ENCODE measurements at regions of chr16 and their contacts with region 1.

Region 1: DNA sequence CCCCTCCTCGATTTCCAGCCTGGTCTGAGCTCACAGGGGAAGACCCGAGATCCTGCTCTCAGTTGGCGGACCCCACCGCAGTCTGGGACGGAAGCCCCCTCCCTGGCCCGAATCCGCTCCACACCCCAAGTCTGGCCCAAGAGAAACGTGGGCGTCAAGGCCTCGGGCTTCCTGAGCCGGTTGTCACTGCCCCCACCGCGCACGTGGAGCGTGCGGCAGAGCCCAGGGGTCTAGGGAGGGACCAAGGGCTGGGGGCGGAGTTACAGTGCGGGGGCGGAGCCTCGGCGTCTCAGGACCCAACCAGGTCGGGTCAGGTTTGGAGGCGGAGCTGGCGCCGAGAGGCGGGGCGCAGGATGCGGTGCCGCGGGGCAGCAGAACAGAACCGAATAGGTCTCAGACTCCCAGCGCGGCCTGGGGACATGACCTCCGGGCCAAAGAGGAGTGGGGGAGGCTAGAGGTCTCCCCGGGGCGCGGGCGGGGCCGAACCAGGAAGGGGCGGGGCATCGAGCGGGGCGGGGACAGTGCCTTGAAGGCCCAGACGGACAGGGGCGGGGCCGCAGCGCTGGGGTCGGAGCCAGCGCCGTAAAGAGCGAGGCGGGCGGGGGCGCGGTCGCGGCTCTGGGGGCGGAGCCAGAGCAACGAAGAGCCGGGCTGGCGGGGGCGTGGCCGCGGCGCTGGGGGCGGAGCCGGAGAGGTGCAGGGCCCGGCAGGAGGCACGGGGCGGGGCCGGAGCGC is 431 bp upstream of the ZFPM1 start:
- DNase-seq: peak; percentile 97 to 100 (median 99)
- ATAC-seq: peak; percentile 72
- H3K4me3 ChIP-seq: peak overlapping the region; percentile 52 to 59
- H3K4me3 Mint-ChIP-seq: peak overlapping the region; percentile 85
- H3K27ac ChIP-seq: peak overlapping the region; percentile 55 to 80
- H3K27ac Mint-ChIP-seq: peak overlapping the region; percentile 88
- H3K4me1 ChIP-seq: peaks cover 33% of the 10 kb centered on the region
- H3K4me1 Mint-ChIP-seq: peaks cover 32% of the 10 kb centered on the region
- H3K27me3 ChIP-seq: no peaks in the 10 kb centered on the region
- H3K27me3 Mint-ChIP-seq: no peaks in the 10 kb centered on the region
- CTCF ChIP-seq: no peak

Region 2: DNA sequence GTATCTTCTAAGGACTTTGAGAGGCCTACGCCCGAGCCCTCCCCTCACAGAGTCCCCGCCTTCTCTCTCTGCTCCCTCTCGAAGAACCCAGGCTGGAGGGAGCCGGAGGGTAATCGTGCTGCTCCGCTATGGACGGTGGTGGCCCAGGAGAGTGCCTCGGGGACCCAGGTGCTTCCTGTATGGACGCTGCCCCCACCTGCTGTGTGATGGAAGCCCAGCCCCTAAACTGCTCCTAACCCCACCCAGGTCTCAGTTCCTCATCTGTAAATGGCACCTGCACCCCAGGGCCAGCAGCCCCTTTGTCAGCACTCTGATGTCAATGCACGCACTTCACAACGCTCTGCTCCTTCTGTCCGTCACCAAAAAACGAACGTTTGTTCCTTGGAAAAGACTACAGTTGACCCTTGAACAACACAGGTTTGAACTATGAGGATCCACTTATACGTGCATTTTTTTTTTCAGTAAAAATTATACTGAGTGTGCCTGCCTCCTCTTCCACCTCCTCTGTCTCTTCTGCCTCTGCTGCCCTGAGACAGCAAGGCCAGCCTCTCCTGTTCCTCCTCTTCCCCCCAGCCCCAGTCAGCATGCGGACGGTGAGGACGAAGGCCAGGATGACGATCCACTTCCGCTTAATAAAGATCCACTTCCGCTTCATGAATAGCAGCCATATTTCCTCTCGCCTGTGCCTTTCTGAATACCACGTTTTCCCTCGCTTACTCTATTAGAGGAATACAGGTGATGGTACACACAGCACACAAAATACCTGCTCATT is 383.1 kb before region 1 on chr16:
- CTCF ChIA-PET with region 1: no interaction called
- POLR2A ChIA-PET with region 1: no interaction called
- intact Hi-C with region 1: no loop called
- DNase-seq: peak in 2 of 9 experiments; percentile 20 to 48
- ATAC-seq: no peak
- H3K4me3 ChIP-seq: no peak overlapping the region
- H3K4me3 Mint-ChIP-seq: no peak overlapping the region
- H3K27ac ChIP-seq: no peak overlapping the region
- H3K27ac Mint-ChIP-seq: peak overlapping the region; percentile 30
- H3K4me1 ChIP-seq: no peaks in the 10 kb centered on the region
- H3K4me1 Mint-ChIP-seq: no peaks in the 10 kb centered on the region
- H3K27me3 ChIP-seq: no peaks in the 10 kb centered on the region
- H3K27me3 Mint-ChIP-seq: no peaks in the 10 kb centered on the region
- CTCF ChIP-seq: no peak

Region 3: GRCh38 chr16:88468275-88469141 is 15.9 kb after region 1 on chr16:
- CTCF ChIA-PET with region 1: interaction called, 6 read pairs
- POLR2A ChIA-PET with region 1: interaction called, 5 read pairs
- intact Hi-C with region 1: loop called (anchors 1 kb)
- DNase-seq: peak in 2 of 9 experiments; percentile 43 to 52
- ATAC-seq: peak; percentile 8
- H3K4me3 ChIP-seq: no peak overlapping the region
- H3K4me3 Mint-ChIP-seq: no peak overlapping the region
- H3K27ac ChIP-seq: peak overlapping the region; percentile 74 to 77
- H3K27ac Mint-ChIP-seq: peak overlapping the region; percentile 66
- H3K4me1 ChIP-seq: peaks cover 83% of the 10 kb centered on the region
- H3K4me1 Mint-ChIP-seq: peaks cover 53% of the 10 kb centered on the region
- H3K27me3 ChIP-seq: no peaks in the 10 kb centered on the region
- H3K27me3 Mint-ChIP-seq: no peaks in the 10 kb centered on the region
- CTCF ChIP-seq: no peak

Region 4: DNA sequence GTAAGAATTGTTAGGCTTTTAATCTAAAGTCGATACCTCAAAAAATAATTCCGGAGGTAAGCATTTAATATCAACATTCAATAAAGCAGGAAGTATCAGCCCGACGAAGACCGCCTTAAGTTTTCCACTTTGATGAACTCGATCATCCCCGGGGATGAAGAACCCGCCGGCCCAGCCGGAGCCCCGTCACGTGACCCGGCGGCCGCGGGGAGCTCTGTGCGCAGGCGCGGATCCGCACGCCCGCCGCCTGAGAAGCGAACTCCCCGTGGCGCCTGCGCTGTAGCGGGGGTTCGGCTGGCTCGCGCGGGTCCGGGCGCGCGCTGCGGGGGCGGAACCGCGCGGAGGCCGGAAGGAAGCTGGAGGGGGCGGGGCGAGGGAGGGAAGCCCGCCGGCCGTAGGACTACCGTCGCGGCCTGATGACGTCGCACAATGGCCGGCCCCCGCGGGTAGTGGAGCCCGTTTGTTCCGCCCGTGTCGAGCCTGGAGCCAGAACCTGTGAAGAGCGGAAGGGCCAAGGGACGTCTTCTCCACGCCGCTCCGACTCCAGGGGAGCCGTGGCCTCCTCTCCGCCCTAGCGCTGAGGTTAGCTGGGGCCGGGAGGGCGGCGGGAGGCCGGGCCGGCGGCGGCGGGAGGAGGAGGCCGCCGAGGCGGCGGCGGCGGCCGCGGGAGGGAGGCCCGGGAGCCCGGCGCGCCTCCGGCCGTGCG is 117.5 kb after region 1 on chr16 and contains the start of gene ZC3H18:
- CTCF ChIA-PET with region 1: interaction called, 3 read pairs
- POLR2A ChIA-PET with region 1: interaction called, 7 read pairs
- intact Hi-C with region 1: loop called in 1 of 2 experiments (anchors 1 kb)
- DNase-seq: peak; percentile 96 to 100 (median 99)
- ATAC-seq: peak; percentile 95
- H3K4me3 ChIP-seq: peak within 1 kb of the TSS; percentile 67 to 76
- H3K4me3 Mint-ChIP-seq: peak within 1 kb of the TSS; percentile 87
- H3K27ac ChIP-seq: peak within 1 kb of the TSS; percentile 55 to 85
- H3K27ac Mint-ChIP-seq: peak within 1 kb of the TSS; percentile 91
- H3K4me1 ChIP-seq: peaks cover 20% of the 10 kb centered on the region
- H3K4me1 Mint-ChIP-seq: peaks cover 34% of the 10 kb centered on the region
- H3K27me3 ChIP-seq: no peaks in the 10 kb centered on the region
- H3K27me3 Mint-ChIP-seq: no peaks in the 10 kb centered on the region
- CTCF ChIP-seq: no peak
- total RNA-seq, gene ZC3H18: 140 to 149 TPM

Region 5: DNA sequence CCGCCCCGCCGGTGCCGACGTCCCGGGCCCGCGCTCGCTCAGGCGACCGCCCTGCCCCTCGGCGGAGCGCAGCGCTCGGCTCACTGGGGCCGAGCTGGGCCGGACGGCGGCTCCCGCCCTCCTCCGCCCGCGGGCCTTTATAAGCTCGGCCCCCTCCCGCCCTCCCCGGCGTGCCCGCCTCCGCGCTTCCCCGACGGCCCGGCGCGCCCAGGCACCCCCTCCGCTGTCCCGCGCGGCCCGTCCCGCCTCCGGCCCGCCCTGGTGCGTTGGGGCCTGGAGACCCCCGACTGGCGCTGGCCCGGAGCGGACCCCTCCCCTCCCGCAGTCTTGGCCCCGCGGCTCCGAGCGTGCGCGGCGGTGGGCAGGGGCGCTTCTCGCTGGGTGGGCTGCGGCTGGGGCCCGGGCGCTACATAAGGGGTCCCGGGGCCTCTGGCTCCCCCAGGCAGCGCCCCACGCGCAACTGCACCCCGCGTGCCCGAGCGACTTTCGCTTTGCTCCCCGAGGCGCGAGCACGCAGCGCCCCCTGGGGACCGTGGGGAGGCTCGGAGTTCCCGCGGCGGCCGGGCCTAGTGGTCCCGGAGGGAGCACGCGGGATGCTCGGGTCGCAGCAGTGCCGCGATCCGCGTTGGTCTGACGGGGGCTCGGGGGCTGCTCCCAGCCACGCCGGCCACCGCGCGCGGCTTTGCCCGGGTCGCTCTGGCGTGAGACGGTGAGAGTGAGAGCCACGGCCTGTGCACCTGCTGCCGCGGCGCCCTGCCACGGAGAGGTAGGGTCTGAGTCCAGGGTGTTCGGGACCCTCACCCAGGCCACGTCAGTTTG is 332.7 kb after region 1 on chr16 and contains the start of gene PIEZO1:
- CTCF ChIA-PET with region 1: no interaction called
- POLR2A ChIA-PET with region 1: no interaction called
- intact Hi-C with region 1: loop called in 1 of 2 experiments (anchors 10 kb)
- DNase-seq: peak; percentile 62 to 93 (median 84)
- ATAC-seq: peak; percentile 52
- H3K4me3 ChIP-seq: peak within 1 kb of the TSS; percentile 58 to 66
- H3K4me3 Mint-ChIP-seq: peak within 1 kb of the TSS; percentile 78
- H3K27ac ChIP-seq: peak within 1 kb of the TSS; percentile 40 to 85
- H3K27ac Mint-ChIP-seq: peak within 1 kb of the TSS; percentile 82
- H3K4me1 ChIP-seq: peaks cover 55% of the 10 kb centered on the region
- H3K4me1 Mint-ChIP-seq: peaks cover 43% of the 10 kb centered on the region
- H3K27me3 ChIP-seq: no peaks in the 10 kb centered on the region
- H3K27me3 Mint-ChIP-seq: no peaks in the 10 kb centered on the region
- CTCF ChIP-seq: peak; percentile 94
- total RNA-seq, gene PIEZO1: 67.4 to 70.1 TPM

Region 6: DNA sequence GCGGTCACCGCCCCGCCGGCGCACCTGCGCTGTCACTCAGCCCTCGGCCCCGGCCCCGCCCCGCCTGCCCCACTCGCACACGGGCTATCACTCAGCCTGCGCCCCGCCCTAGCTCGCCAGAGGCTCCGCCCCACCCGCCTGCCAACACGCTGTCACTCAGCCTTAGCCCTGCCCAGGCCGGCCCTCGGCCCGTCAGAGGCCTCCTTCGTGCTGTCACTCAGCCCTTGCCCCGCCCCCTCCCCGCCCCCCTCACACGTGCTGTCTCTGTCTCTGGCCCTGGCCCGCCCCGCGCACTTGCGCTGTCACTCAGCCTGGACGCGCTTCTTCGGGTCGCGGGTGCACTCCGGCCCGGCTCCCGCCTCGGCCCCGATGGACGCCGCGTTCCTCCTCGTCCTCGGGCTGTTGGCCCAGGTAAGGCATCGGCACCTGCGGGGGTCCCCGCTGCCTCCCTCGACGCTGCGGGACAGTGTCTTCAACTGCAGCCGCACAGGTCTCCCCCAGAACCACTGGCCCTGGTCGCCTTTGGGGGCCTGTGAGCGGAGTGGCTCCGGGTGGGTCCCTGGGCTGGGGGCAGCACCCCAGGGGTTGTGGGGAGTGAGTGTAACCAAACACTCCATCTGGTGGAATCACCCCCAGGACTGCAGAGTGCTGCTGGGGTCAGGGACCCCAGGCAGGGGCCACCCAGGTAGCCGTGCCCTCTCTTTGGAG is 719.0 kb after region 1 on chr16 and contains the start of gene CDH15:
- CTCF ChIA-PET with region 1: no interaction called
- POLR2A ChIA-PET with region 1: no interaction called
- intact Hi-C with region 1: loop called in 1 of 2 experiments (anchors 5 kb)
- DNase-seq: peak; percentile 83 to 98 (median 91)
- ATAC-seq: peak; percentile 96
- H3K4me3 ChIP-seq: peak within 1 kb of the TSS; percentile 35 to 50
- H3K4me3 Mint-ChIP-seq: peak within 1 kb of the TSS; percentile 69
- H3K27ac ChIP-seq: no peak within 1 kb of the TSS
- H3K27ac Mint-ChIP-seq: no peak within 1 kb of the TSS
- H3K4me1 ChIP-seq: peaks cover 29% of the 10 kb centered on the region
- H3K4me1 Mint-ChIP-seq: peaks cover 6% of the 10 kb centered on the region
- H3K27me3 ChIP-seq: peaks cover 0 to 2% of the 10 kb centered on the region in 2 experiments
- H3K27me3 Mint-ChIP-seq: no peaks in the 10 kb centered on the region
- CTCF ChIP-seq: no peak
- total RNA-seq, gene CDH15: 0.24 TPM in 1 of 2 experiments, not detected in the other

Measured in CD8-positive, alpha-beta T cell (primary cell).